WTC11 (cell line): ENCODE measurements at regions of chr9 and their contacts with region 1.

Region 1: GRCh38 chr9:126386088-126386487 is 59.5 kb downstream of the MVB12B start:
- DNase-seq: peak; percentile 32
- ATAC-seq: peak; percentile 93
- H3K4me3 Mint-ChIP-seq: no peak overlapping the region
- H3K27ac Mint-ChIP-seq: no peak overlapping the region
- H3K4me1 Mint-ChIP-seq: peaks cover 18% of the 10 kb centered on the region
- H3K27me3 Mint-ChIP-seq: no peaks in the 10 kb centered on the region
- CTCF ChIP-seq: no peak

Region 2: GRCh38 chr9:126301985-126302603 is 84.0 kb before region 1 on chr9:
- CTCF ChIA-PET with region 1: interaction called, 10 read pairs
- POLR2A ChIA-PET with region 1: no interaction called
- DNase-seq: peak; percentile 61
- ATAC-seq: peak; percentile 88
- H3K4me3 Mint-ChIP-seq: no peak overlapping the region
- H3K27ac Mint-ChIP-seq: no peak overlapping the region
- H3K4me1 Mint-ChIP-seq: no peaks in the 10 kb centered on the region; the same call in 1 of the 2 replicates
- H3K27me3 Mint-ChIP-seq: no peaks in the 10 kb centered on the region
- CTCF ChIP-seq: no peak

Region 3: GRCh38 chr9:126317513-126317912 is 68.6 kb before region 1 on chr9:
- CTCF ChIA-PET with region 1: interaction called, 12 read pairs
- POLR2A ChIA-PET with region 1: no interaction called
- DNase-seq: no peak
- ATAC-seq: no peak
- H3K4me3 Mint-ChIP-seq: no peak overlapping the region
- H3K27ac Mint-ChIP-seq: no peak overlapping the region
- H3K4me1 Mint-ChIP-seq: no peaks in the 10 kb centered on the region; the same call in 1 of the 2 replicates
- H3K27me3 Mint-ChIP-seq: peaks cover 3% of the 10 kb centered on the region; the same call in 1 of the 2 replicates
- CTCF ChIP-seq: no peak